Pancreas (tissue), 10 donors: ENCODE measurements at regions of chr15 and their contacts with region 1.

Region 1: DNA sequence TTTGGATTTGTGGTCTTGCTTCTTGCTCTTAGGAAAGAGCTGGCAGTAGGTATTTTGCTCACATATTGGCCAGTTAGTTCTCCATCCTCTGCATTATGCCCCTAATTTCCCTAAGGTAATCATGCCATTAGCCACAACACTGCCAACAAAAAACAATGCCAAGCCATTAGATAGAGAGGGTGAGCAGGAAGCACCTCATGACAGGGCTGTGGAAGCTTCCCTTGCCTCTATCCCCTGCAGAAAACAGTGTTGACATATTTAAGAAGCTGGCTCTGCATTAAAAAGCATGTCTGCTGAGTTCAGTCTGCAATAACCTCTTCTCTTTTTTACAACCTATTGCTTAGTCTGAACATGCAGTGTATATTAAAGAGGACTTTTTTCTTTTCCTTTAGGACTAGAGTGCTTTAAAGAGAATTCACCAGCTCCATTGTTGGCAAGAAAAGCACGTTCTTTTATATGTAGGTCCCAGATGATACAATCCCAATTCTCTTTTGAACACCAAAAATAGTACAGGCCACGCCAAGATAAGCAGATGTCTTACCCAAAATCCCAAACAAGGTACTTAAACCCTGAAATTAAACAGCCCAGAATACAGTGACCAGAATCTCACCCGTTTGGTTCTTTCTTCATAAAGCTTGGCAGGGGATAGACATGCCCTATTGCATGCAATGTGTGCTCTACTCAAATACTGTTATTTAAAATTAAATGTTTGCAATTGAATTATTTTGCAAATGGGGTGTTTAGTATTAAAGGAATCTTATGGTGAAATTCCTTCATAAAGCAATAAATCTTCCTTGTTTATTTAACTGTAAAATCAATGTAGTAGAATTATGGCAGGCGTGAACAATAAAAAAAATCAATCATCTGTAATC is 93.7 kb upstream of the UBE3A start:
- DNase-seq: no peak
- ATAC-seq: no peak
- H3K4me3 ChIP-seq: no peak overlapping the region
- H3K27ac ChIP-seq: no peak overlapping the region
- H3K4me1 ChIP-seq: no peaks in the 10 kb centered on the region
- H3K27me3 ChIP-seq: no peaks in the 10 kb centered on the region
- CTCF ChIP-seq: no peak

Region 2: DNA sequence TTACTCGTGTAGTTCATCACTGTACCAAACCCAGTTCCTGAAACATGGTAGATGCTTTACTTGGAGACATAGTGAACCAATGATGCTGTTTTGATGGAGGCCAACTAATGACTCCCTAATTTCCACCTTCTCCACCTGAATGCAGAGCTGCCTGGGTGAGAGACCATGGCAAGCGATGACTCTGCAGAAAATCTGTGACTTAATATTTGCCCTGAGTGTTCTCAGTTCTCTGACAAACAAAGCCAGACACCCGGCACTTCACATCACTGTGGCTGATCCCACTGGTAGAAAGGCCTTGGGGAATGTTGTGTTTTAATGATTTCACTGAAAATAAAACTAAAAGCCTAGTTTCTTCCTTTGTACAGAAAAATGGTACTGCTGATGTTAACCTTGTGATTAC is 54.2 kb before region 1 on chr15:
- intact Hi-C with region 1: loop called in 1 of 3 experiments (anchors 10 kb)
- DNase-seq: no peak
- ATAC-seq: peak in 2 of 4 donors; percentile 45 to 52
- H3K4me3 ChIP-seq: no peak overlapping the region
- H3K27ac ChIP-seq: no peak overlapping the region
- H3K4me1 ChIP-seq: no peaks in the 10 kb centered on the region
- H3K27me3 ChIP-seq: no peaks in the 10 kb centered on the region
- CTCF ChIP-seq: no peak